ENCODE measurements at regions of chr1 and their contacts with region 1.

Region 1: DNA sequence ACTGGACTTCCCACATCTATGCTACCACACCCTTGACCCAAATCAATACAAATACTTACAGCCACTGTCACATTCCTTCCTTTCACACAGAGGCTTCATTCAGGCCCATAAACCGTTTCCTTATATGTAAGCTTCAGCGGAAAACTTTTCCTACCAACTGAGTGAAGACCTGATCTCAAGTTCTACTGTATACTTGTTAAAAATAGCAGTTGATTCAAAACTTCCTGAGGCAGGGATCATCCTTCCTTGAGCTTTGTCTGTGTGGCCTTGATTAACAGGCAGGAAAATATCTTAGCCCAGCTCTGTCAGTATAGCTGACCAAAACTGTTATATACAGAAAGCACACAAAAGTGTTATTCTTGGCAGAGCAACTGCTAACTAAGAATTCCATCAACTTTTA is 42.7 kb downstream of the DENND2C start:
- DNase-seq: peak; percentile 4
- H3K4me3 Mint-ChIP-seq: no peak overlapping the region
- H3K27ac Mint-ChIP-seq: peak overlapping the region; percentile 30
- H3K4me1 Mint-ChIP-seq: peaks cover 11% of the 10 kb centered on the region
- H3K27me3 Mint-ChIP-seq: no peaks in the 10 kb centered on the region
- CTCF ChIP-seq: no peak

Region 2: GRCh38 chr1:114997510-114998289 is 370.6 kb after region 1 on chr1:
- CTCF ChIA-PET with region 1: no interaction called
- intact Hi-C with region 1: loop called (anchors 5 kb)
- DNase-seq: no peak
- H3K4me3 Mint-ChIP-seq: no peak overlapping the region
- H3K27ac Mint-ChIP-seq: no peak overlapping the region
- H3K4me1 Mint-ChIP-seq: no peaks in the 10 kb centered on the region
- H3K27me3 Mint-ChIP-seq: no peaks in the 10 kb centered on the region
- CTCF ChIP-seq: no peak